ENCODE measurements at regions of chrX and their contacts with region 1.

Region 1: DNA sequence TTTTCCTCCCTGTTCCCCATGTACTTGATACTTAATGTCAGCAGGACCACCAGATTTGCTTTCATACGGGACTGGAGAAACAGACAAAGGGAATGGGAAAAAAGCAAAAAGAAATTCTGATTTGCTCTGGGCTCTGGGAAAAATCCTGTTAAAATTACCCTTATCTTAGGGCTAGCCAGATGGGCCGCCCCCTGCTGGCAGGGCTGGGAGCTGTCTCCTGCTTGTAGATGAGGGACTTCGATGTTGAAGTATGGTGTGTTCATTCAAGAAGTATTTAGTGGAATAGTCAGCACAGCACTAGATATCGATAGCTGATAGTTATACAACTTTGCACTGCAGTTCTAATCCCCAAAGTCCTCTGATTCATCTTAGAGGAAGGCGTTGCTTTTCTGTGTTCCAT is 45.8 kb downstream of the BCORL1 start:
- H3K4me3 ChIP-seq: no peak overlapping the region
- H3K27ac ChIP-seq: no peak overlapping the region
- H3K4me1 ChIP-seq: no peaks in the 10 kb centered on the region
- CTCF ChIP-seq: peak; percentile 36; the same call in 1 of the 2 replicates

Region 2: DNA sequence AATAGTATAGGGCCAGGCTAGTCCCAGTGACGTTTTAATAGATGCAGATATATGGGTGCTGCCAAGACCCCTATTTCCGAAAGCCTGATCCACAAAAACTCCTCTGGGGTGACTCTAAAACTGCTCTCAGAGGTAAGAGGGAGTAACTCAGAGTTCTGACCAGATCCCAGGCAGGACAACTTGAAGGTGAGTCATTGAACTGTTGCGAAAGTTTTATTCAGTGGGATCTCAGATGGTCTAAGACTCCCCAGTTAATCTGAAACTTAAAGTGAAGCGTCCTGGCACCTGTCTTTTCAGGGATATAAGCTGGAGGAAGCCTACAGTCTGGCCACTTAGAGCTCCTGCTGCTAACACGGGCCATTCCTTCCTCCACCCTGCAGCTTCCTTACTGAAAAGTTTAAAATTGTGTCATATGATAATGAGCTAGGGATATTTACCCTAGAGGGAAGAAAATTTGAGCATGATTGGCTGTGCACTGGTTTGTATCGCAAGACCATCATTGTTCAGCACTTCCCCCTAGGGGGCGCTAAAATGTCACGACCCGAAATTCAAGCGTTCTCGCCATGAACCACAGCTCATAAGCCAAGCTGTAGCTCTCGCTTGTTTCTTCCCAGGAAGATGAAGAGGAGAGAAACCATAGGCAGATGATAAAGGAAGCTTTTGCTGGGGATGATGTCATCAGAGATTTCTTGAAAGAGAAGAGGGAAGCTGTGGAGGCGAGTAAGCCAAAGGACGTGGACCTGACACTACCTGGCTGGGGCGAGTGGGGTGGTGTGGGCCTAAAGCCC is 102.7 kb before region 1 on chrX:
- CTCF ChIA-PET with region 1: interaction called, 22 read pairs
- POLR2A ChIA-PET with region 1: interaction called, 7 read pairs
- H3K4me3 ChIP-seq: no peak overlapping the region
- H3K27ac ChIP-seq: no peak overlapping the region
- H3K4me1 ChIP-seq: no peaks in the 10 kb centered on the region
- CTCF ChIP-seq: peak; percentile 44; the same call in 1 of the 2 replicates

Region 3: GRCh38 chrX:129953881-129954280 is 74.3 kb before region 1 on chrX:
- CTCF ChIA-PET with region 1: no interaction called
- POLR2A ChIA-PET with region 1: no interaction called
- H3K4me3 ChIP-seq: no peak overlapping the region
- H3K27ac ChIP-seq: no peak overlapping the region
- H3K4me1 ChIP-seq: no peaks in the 10 kb centered on the region
- CTCF ChIP-seq: no peak

Region 4: GRCh38 chrX:130039847-130040246 is 11.7 kb after region 1 on chrX:
- CTCF ChIA-PET with region 1: interaction called, 27 read pairs
- POLR2A ChIA-PET with region 1: no interaction called
- H3K4me3 ChIP-seq: no peak overlapping the region
- H3K27ac ChIP-seq: no peak overlapping the region
- H3K4me1 ChIP-seq: no peaks in the 10 kb centered on the region
- CTCF ChIP-seq: no peak

Measured in HEK293 (cell line).